ENCODE measurements at regions of chr9 and their contacts with region 1.

Region 1: GRCh38 chr9:104747558-104748358 is at the start of gene NIPSNAP3A:
- DNase-seq: peak; percentile 97
- H3K4me3 Mint-ChIP-seq: peak within 1 kb of the TSS; percentile 93
- H3K27ac Mint-ChIP-seq: peak within 1 kb of the TSS; percentile 96
- H3K4me1 Mint-ChIP-seq: peaks cover 26% of the 10 kb centered on the region
- H3K27me3 Mint-ChIP-seq: no peaks in the 10 kb centered on the region
- total RNA-seq, gene NIPSNAP3A: 9.4 and 10.8 TPM in 2 replicates

Region 2: DNA sequence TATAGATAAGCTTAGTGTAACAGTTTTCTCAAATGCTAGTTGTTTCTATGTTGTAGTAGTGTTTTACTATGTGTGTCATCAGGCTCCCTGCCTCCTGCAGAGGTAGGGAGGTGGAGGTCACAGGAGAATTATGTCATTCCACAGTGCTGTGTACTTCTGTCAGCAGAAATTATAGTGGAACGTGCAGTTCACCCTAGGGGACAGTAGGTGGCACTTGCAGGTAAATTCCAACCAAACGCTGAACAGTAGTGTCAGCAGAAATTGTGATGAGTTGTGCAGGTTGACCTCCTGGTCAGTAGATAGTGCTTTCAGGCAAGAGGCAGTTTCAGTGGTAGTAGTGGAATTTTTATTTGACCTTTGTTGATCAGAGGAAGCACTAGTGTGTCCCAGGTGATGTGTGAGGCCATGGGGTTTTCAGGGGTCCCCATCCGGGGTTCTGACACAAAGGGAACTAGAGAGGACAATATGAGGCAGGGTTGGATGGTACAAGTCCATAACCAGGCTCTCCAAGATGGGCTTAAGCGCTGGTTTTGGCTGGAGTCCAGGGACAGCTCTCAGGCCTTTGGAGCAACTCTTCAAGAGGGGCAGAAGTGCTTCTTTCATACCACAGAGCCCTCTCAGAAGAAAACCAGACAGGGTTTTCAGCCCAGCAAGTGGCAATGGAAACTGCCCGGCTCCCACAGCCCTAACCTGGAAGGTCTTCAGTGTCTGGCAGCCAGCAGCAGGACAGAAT is 1349.7 kb before region 1 on chr9:
- intact Hi-C with region 1: loop called (anchors 2 kb)
- DNase-seq: peak; percentile 71
- H3K4me3 Mint-ChIP-seq: no peak overlapping the region
- H3K27ac Mint-ChIP-seq: no peak overlapping the region
- H3K4me1 Mint-ChIP-seq: no peaks in the 10 kb centered on the region
- H3K27me3 Mint-ChIP-seq: no peaks in the 10 kb centered on the region

Region 3: DNA sequence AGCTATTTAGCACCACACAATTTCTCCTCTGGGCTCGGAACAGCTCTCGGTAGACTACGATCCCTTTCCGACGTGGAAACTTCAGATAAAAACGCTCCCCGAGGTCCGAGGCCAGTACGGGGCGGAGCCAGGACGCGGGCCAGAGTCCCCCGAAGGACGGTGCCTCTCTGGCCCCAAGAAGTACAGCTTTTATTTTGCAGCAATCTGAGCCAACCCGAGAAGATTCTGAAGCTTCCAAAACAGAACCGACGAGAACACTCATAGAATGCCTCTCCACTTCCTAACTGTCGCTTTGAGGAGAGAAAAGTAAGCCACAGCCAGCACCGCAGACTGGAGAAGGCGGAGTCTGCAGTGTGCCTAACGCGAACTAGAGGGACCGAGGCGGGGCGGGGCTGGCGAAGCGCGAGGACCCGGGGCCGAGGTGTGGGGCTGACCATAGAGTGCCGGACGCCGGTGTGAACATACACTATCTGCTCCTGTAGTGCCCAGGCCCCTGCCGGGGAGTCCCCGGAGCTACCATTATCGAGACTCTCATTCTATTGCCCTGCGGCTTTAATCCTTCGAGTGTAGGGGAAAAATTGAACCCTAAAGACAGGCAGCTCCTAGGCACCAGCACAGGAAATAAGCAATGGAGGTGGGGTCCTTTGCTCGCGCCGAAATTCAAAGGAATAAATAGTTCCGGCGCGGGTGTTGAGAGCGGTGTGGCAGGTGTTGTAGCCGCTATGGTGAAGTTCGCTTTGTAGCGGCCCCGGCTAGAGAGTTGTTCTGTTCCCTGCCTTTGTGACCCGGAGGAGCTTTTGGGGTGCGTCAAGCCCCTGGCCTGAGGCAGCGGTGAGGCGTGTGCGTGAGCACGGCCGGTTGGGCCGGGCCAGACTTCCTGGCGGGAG is 653.9 kb before region 1 on chr9 and contains the start of gene SMC2:
- intact Hi-C with region 1: loop called (anchors 1 kb)
- DNase-seq: peak; percentile 98
- H3K4me3 Mint-ChIP-seq: peak within 1 kb of the TSS; percentile 98
- H3K27ac Mint-ChIP-seq: peak within 1 kb of the TSS; percentile 100
- H3K4me1 Mint-ChIP-seq: peaks cover 34% of the 10 kb centered on the region
- H3K27me3 Mint-ChIP-seq: no peaks in the 10 kb centered on the region
- total RNA-seq, gene SMC2: 57.2 and 60.8 TPM in 2 replicates

Region 4: GRCh38 chr9:104322596-104322995 is 425.2 kb before region 1 on chr9:
- intact Hi-C with region 1: no loop called
- DNase-seq: no peak
- H3K4me3 Mint-ChIP-seq: no peak overlapping the region
- H3K27ac Mint-ChIP-seq: no peak overlapping the region
- H3K4me1 Mint-ChIP-seq: no peaks in the 10 kb centered on the region
- H3K27me3 Mint-ChIP-seq: no peaks in the 10 kb centered on the region

Region 5: GRCh38 chr9:104386425-104387069 is 361.2 kb before region 1 on chr9:
- intact Hi-C with region 1: loop called (anchors 10 kb)
- DNase-seq: peak; percentile 6
- H3K4me3 Mint-ChIP-seq: no peak overlapping the region
- H3K27ac Mint-ChIP-seq: no peak overlapping the region
- H3K4me1 Mint-ChIP-seq: no peaks in the 10 kb centered on the region
- H3K27me3 Mint-ChIP-seq: no peaks in the 10 kb centered on the region

Region 6: GRCh38 chr9:104961238-104961637 is 213.5 kb after region 1 on chr9:
- intact Hi-C with region 1: loop called (anchors 2 kb)
- DNase-seq: peak; percentile 87
- H3K4me3 Mint-ChIP-seq: peak overlapping the region; percentile 48
- H3K27ac Mint-ChIP-seq: peak overlapping the region; percentile 75
- H3K4me1 Mint-ChIP-seq: peaks cover 28% of the 10 kb centered on the region
- H3K27me3 Mint-ChIP-seq: no peaks in the 10 kb centered on the region

Region 7: GRCh38 chr9:105244003-105244733 is 496.4 kb after region 1 on chr9 and contains the start of gene SLC44A1:
- intact Hi-C with region 1: loop called (anchors 2 kb)
- DNase-seq: peak; percentile 98
- H3K4me3 Mint-ChIP-seq: peak within 1 kb of the TSS; percentile 88
- H3K27ac Mint-ChIP-seq: peak within 1 kb of the TSS; percentile 74
- H3K4me1 Mint-ChIP-seq: peaks cover 22% of the 10 kb centered on the region
- H3K27me3 Mint-ChIP-seq: peaks cover 73% of the 10 kb centered on the region
- total RNA-seq, gene SLC44A1: 2.5 and 2.9 TPM in 2 replicates

Region 8: DNA sequence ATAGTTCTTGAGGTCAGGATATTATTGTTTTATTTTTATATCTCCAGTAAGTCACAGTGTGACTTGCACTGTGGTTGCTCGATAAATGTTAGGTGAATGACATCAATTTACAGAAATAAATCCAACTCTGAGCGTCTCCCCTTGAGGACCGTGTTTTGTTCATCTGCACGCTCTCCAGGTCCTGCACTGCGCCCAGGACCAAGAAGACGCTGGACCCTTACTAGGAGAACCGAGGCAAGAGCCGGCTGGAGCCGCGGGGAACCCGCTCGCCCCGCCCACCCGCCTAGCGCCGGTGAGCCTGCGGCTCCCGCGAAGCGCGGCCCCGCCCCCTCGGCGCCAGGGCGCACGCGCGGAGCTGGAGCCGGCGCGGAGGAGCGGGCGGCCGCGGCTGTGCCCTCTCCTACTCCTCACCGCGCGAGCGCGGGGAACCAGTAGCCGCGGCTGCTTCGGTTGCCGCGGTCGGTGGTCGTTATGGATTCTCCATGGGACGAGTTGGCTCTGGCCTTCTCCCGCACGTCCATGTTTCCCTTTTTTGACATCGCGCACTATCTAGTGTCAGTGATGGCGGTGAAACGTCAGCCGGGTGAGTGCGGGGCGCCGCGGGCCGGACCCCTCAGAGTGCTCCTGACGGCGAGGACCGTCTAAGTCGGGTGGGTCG is 946.6 kb after region 1 on chr9 and contains the start of gene TMEM38B:
- intact Hi-C with region 1: loop called (anchors 10 kb)
- DNase-seq: peak; percentile 95
- H3K4me3 Mint-ChIP-seq: peak within 1 kb of the TSS; percentile 82
- H3K27ac Mint-ChIP-seq: peak within 1 kb of the TSS; percentile 63
- H3K4me1 Mint-ChIP-seq: peaks cover 16% of the 10 kb centered on the region
- H3K27me3 Mint-ChIP-seq: peaks cover 26% of the 10 kb centered on the region
- total RNA-seq, gene TMEM38B: 10.9 and 12.0 TPM in 2 replicates

Measured in activated CD4-positive, alpha-beta T cell treated with anti-CD3 and anti-CD28 coated beads, Interleukin-2, amount 10 ng/mL, durations not matched to agents 24 days and 14 days (primary cell).